Endothelial cell of umbilical vein (primary cell): ENCODE measurements at regions of chr10 and their contacts with region 1.

Region 1: GRCh38 chr10:124152916-124153826 is 59.8 kb upstream of the CHST15 start:
- DNase-seq: peak; percentile 89
- H3K4me3 ChIP-seq: no peak overlapping the region
- H3K27ac ChIP-seq: peak overlapping the region; percentile 4
- H3K4me1 ChIP-seq: peaks cover 27% of the 10 kb centered on the region
- H3K27me3 ChIP-seq: no peaks in the 10 kb centered on the region
- CTCF ChIP-seq: no peak
- POLR2A ChIP-seq: no peak

Region 2: DNA sequence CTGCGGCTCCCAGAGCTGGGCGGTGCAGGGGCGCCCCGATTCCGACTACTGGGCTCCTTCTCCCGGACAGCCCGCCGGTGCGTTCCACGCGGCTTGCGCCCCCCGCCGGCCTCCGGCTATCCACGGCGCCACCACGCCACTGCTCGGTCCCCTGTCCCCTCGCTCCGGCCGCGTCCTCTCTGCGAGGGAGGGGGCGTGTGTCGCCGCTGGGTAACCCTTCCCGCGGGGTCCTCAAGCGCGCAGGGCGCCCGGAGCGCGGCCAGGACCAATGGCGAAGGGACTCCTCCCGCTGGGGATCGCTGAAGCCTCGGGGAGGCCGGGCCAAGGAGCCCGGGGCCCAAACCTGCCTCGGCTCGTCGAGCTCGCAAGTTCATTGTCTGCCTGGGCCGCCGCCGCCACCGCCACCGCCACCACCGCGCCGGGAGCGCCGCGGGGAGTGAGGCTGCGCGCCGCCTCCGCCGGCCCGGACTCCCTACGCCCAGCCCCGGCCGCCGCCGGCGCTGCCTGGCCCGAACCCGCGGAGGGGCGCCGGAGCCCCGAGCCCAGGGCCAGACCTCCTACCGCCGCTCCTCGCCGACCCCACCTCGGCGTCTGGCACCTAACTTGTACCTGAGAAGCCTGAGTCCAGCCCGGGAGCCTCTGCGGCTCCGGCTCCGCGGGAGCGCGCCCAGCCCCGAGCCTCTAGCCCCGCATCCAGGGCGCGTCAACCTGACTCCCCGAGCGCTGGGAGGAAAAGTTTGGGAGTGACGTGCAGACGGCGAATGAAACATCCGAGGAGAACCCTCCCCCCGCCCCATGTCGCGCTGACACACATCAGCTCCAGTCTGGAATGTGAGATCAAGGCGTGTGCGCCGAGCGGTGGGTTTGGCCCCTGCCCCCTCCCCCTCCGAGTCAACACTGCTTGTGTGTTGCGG is 60.1 kb before region 1 on chr10 and contains the start of gene CHST15:
- CTCF ChIA-PET with region 1: interaction called, 3 read pairs
- POLR2A ChIA-PET with region 1: no interaction called
- dilution Hi-C with region 1: no loop called
- intact Hi-C with region 1: loop called (anchors 1 kb)
- DNase-seq: peak; percentile 63
- H3K4me3 ChIP-seq: peak within 1 kb of the TSS; percentile 21 to 75 (median 25)
- H3K27ac ChIP-seq: no peak within 1 kb of the TSS
- H3K4me1 ChIP-seq: peaks cover 6% of the 10 kb centered on the region
- H3K27me3 ChIP-seq: peaks cover 4 to 47% of the 10 kb centered on the region in 2 experiments
- CTCF ChIP-seq: peak in 1 of 2 donors; percentile 29
- POLR2A ChIP-seq: no peak
- total RNA-seq, gene CHST15: 23.1 and 29.2 TPM in 2 replicates

Region 3: GRCh38 chr10:124106241-124106879 is 46.8 kb before region 1 on chr10:
- CTCF ChIA-PET with region 1: interaction called, 3 read pairs
- POLR2A ChIA-PET with region 1: no interaction called
- dilution Hi-C with region 1: no loop called
- intact Hi-C with region 1: loop called (anchors 1 kb)
- DNase-seq: peak; percentile 97
- H3K4me3 ChIP-seq: no peak overlapping the region
- H3K27ac ChIP-seq: peak overlapping the region; percentile 38
- H3K4me1 ChIP-seq: peaks cover 15% of the 10 kb centered on the region
- H3K27me3 ChIP-seq: no peaks in the 10 kb centered on the region
- CTCF ChIP-seq: no peak
- POLR2A ChIP-seq: no peak

Region 4: DNA sequence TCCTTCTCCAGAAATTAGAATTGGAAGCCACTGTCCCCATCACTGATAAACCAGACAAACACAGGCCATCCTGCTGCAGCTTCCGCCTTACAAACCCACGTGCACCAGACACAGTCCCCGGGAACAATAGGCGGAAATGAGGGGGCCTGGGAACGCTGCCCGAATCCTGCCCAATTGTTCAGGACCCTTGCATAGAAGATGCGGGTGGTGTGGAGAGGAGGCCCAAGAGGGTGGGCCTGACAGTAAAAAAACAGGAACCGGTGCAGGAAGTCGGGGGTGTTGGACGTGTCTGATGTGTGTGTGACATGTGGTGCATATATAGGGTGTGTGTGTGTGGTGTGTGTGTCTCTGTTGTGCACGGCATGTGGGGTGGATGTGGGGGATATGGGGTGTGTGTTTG is 33.2 kb before region 1 on chr10:
- CTCF ChIA-PET with region 1: no interaction called
- POLR2A ChIA-PET with region 1: interaction called, 7 read pairs
- dilution Hi-C with region 1: no loop called
- intact Hi-C with region 1: loop called (anchors 1 kb)
- DNase-seq: peak; percentile 98
- H3K4me3 ChIP-seq: no peak overlapping the region
- H3K27ac ChIP-seq: peak overlapping the region; percentile 87
- H3K4me1 ChIP-seq: peaks cover 21% of the 10 kb centered on the region
- H3K27me3 ChIP-seq: no peaks in the 10 kb centered on the region
- CTCF ChIP-seq: no peak
- POLR2A ChIP-seq: no peak